Caco-2 (cell line): ENCODE measurements at regions of chr12 and their contacts with region 1.

Region 1: GRCh38 chr12:41277116-41277945 is 89.2 kb downstream of the PDZRN4 start:
- DNase-seq: peak; percentile 35 to 36
- H3K4me3 ChIP-seq: no peak overlapping the region
- H3K4me3 Mint-ChIP-seq: no peak overlapping the region
- H3K27ac Mint-ChIP-seq: no peak overlapping the region
- H3K4me1 ChIP-seq: no peaks in the 10 kb centered on the region
- H3K4me1 Mint-ChIP-seq: no peaks in the 10 kb centered on the region
- H3K27me3 ChIP-seq: no peaks in the 10 kb centered on the region
- H3K27me3 Mint-ChIP-seq: no peaks in the 10 kb centered on the region
- CTCF ChIP-seq: peak; percentile 58 to 73

Region 2: DNA sequence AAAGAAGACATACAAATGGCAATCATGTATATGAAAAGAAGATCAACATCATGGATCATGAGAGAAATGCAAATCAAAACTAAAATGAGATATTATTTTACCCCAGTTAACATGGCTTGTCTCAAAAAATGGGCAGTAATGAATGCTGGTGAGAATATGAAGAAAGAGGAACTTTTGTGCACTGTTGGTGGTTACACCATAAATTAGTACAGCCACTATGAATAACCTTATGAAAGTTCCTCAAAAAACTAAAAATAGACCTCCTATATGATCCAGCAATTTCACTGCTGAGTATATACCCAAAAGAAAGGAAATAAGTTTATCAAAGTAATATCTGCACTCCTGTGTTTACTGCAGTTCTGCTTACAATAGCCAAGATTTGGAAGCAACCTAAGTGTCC is 62.5 kb after region 1 on chr12:
- CTCF ChIA-PET with region 1: no interaction called
- POLR2A ChIA-PET with region 1: no interaction called
- intact Hi-C with region 1: no loop called
- DNase-seq: no peak
- H3K4me3 ChIP-seq: no peak overlapping the region
- H3K4me3 Mint-ChIP-seq: no peak overlapping the region
- H3K27ac Mint-ChIP-seq: no peak overlapping the region
- H3K4me1 ChIP-seq: no peaks in the 10 kb centered on the region
- H3K4me1 Mint-ChIP-seq: no peaks in the 10 kb centered on the region
- H3K27me3 ChIP-seq: no peaks in the 10 kb centered on the region
- H3K27me3 Mint-ChIP-seq: no peaks in the 10 kb centered on the region
- CTCF ChIP-seq: no peak

Region 3: GRCh38 chr12:41663598-41664258 is 386.4 kb after region 1 on chr12:
- CTCF ChIA-PET with region 1: no interaction called
- POLR2A ChIA-PET with region 1: no interaction called
- intact Hi-C with region 1: loop called (anchors 1 kb)
- DNase-seq: peak in 1 of 2 experiments; percentile 25
- H3K4me3 ChIP-seq: no peak overlapping the region
- H3K4me3 Mint-ChIP-seq: no peak overlapping the region
- H3K27ac Mint-ChIP-seq: no peak overlapping the region
- H3K4me1 ChIP-seq: no peaks in the 10 kb centered on the region
- H3K4me1 Mint-ChIP-seq: no peaks in the 10 kb centered on the region
- H3K27me3 ChIP-seq: no peaks in the 10 kb centered on the region
- H3K27me3 Mint-ChIP-seq: no peaks in the 10 kb centered on the region
- CTCF ChIP-seq: peak; percentile 57 to 69

Region 4: GRCh38 chr12:41745593-41745992 is 468.3 kb after region 1 on chr12:
- CTCF ChIA-PET with region 1: no interaction called
- POLR2A ChIA-PET with region 1: no interaction called
- intact Hi-C with region 1: loop called (anchors 1 kb)
- DNase-seq: no peak
- H3K4me3 ChIP-seq: no peak overlapping the region
- H3K4me3 Mint-ChIP-seq: no peak overlapping the region
- H3K27ac Mint-ChIP-seq: no peak overlapping the region
- H3K4me1 ChIP-seq: no peaks in the 10 kb centered on the region
- H3K4me1 Mint-ChIP-seq: no peaks in the 10 kb centered on the region
- H3K27me3 ChIP-seq: no peaks in the 10 kb centered on the region
- H3K27me3 Mint-ChIP-seq: no peaks in the 10 kb centered on the region
- CTCF ChIP-seq: no peak